Colonic mucosa (tissue), 4 donors: ENCODE measurements at regions of chr16 and their contacts with region 1.

Region 1: GRCh38 chr16:19502395-19503131 is 19.3 kb downstream of the GDE1 start:
- DNase-seq: peak; percentile 84
- H3K4me3 ChIP-seq: no peak overlapping the region
- H3K27ac ChIP-seq: no peak overlapping the region
- H3K4me1 ChIP-seq: no peaks in the 10 kb centered on the region
- H3K27me3 ChIP-seq: no peaks in the 10 kb centered on the region
- CTCF ChIP-seq: peak; percentile 61

Region 2: GRCh38 chr16:19086322-19087199 is 416.0 kb before region 1 on chr16:
- intact Hi-C with region 1: loop called (anchors 10 kb)
- DNase-seq: peak; percentile 91
- H3K4me3 ChIP-seq: peak overlapping the region; percentile 37
- H3K27ac ChIP-seq: peak overlapping the region; percentile 13
- H3K4me1 ChIP-seq: no peaks in the 10 kb centered on the region
- H3K27me3 ChIP-seq: no peaks in the 10 kb centered on the region
- CTCF ChIP-seq: peak; percentile 98

Region 3: GRCh38 chr16:19389246-19389645 is 113.3 kb before region 1 on chr16:
- intact Hi-C with region 1: loop called (anchors 5 kb)
- DNase-seq: peak; percentile 91
- H3K4me3 ChIP-seq: no peak overlapping the region
- H3K27ac ChIP-seq: peak overlapping the region; percentile 15
- H3K4me1 ChIP-seq: no peaks in the 10 kb centered on the region
- H3K27me3 ChIP-seq: no peaks in the 10 kb centered on the region
- CTCF ChIP-seq: peak; percentile 49

Region 4: DNA sequence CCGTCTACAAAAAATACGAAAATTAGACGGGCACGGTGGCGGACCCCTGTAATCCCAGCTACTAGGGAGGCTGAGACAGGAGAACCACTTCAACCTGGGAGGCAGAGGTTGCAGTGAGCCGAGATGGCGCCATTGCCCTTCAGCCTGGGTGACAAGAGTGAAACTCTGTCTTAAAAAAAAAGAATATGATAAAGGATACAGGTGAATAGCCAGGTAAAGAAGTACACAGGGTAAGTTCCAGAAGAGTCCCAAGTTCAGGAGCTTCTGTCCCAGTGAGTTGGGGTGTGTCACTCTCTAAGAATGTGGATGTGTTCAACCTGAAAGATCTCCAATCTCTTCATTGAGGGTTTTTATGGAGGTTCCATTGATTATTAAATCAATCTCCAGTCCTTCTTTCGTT is 78.1 kb before region 1 on chr16:
- intact Hi-C with region 1: no loop called
- DNase-seq: no peak
- H3K4me3 ChIP-seq: no peak overlapping the region
- H3K27ac ChIP-seq: peak overlapping the region; percentile 24
- H3K4me1 ChIP-seq: no peaks in the 10 kb centered on the region
- H3K27me3 ChIP-seq: no peaks in the 10 kb centered on the region
- CTCF ChIP-seq: no peak

Region 5: DNA sequence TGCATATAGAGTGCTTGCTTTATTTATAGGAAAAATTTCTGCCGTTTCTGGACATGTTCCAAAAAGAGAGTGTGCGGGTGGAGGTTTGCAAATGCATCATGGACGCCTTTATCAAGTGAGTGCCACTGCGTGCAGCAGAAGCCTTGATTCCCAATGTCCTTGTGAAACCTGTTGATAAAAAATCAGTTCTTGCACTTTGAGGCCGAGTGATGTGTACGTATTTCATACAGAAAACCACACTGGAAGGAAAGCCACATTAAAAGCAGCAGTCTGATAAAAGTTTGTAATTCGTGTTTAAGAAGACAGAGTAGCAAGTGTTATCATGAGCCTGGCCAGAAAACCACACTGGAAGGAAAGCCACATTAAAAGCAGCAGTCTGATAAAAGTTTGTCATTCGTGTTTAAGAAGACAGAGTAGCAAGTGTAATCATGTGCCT is 137.4 kb after region 1 on chr16:
- intact Hi-C with region 1: no loop called
- DNase-seq: no peak
- H3K4me3 ChIP-seq: no peak overlapping the region
- H3K27ac ChIP-seq: no peak overlapping the region
- H3K4me1 ChIP-seq: no peaks in the 10 kb centered on the region
- H3K27me3 ChIP-seq: no peaks in the 10 kb centered on the region
- CTCF ChIP-seq: no peak